ENCODE measurements at regions of chr13 and their contacts with region 1.

Region 1: DNA sequence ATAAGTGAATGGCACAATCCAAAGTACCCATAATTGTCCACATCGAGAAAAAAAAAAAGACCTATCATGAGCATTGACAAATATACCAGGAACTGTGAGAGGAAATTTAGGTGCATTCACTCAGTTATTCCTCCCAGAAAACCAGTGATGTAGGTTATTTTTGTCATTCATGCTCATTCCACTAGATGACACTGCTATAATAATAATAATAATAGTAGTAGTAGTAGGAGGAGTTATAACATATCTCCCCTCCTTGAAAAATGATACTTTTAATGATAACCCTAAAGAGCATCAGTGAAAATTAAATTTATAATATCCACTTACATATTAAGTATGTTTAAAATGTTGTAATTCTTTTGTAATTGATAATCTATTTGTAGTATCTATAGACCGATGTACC is 463.9 kb upstream of the MIR17HG start:
- DNase-seq: no peak
- H3K4me3 ChIP-seq: no peak overlapping the region
- H3K27ac ChIP-seq: no peak overlapping the region
- H3K4me1 ChIP-seq: no peaks in the 10 kb centered on the region
- H3K27me3 ChIP-seq: no peaks in the 10 kb centered on the region
- CTCF ChIP-seq: peak; percentile 29; the same call in 1 of the 2 replicates

Region 2: DNA sequence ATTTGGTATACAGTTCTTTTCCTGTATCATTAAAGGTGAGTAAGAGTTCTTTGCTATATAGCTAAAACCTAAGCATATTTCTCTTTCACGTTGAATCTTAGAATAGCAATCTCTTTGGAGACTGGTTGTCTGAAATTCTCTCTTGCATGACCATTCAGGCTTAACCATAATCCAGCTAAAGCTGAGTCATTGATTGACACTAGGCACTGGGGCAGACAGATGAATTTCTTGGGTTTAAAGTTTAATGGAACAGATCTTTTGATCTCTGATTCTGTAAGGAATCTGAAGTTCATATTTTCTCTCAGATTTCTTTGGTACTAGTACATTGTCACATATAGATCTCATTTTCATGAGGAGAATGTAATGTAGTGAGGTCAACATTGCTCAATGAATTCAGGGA is 66.6 kb after region 1 on chr13:
- CTCF ChIA-PET with region 1: no interaction called
- POLR2A ChIA-PET with region 1: no interaction called
- intact Hi-C with region 1: no loop called
- DNase-seq: no peak
- H3K4me3 ChIP-seq: no peak overlapping the region
- H3K27ac ChIP-seq: no peak overlapping the region
- H3K4me1 ChIP-seq: no peaks in the 10 kb centered on the region
- H3K27me3 ChIP-seq: no peaks in the 10 kb centered on the region
- CTCF ChIP-seq: no peak

Region 3: GRCh38 chr13:90968166-90968904 is 84.7 kb after region 1 on chr13:
- CTCF ChIA-PET with region 1: no interaction called
- POLR2A ChIA-PET with region 1: no interaction called
- intact Hi-C with region 1: loop called (anchors 5 kb)
- DNase-seq: peak; percentile 41
- H3K4me3 ChIP-seq: no peak overlapping the region
- H3K27ac ChIP-seq: no peak overlapping the region
- H3K4me1 ChIP-seq: no peaks in the 10 kb centered on the region
- H3K27me3 ChIP-seq: no peaks in the 10 kb centered on the region
- CTCF ChIP-seq: peak; percentile 57

Region 4: DNA sequence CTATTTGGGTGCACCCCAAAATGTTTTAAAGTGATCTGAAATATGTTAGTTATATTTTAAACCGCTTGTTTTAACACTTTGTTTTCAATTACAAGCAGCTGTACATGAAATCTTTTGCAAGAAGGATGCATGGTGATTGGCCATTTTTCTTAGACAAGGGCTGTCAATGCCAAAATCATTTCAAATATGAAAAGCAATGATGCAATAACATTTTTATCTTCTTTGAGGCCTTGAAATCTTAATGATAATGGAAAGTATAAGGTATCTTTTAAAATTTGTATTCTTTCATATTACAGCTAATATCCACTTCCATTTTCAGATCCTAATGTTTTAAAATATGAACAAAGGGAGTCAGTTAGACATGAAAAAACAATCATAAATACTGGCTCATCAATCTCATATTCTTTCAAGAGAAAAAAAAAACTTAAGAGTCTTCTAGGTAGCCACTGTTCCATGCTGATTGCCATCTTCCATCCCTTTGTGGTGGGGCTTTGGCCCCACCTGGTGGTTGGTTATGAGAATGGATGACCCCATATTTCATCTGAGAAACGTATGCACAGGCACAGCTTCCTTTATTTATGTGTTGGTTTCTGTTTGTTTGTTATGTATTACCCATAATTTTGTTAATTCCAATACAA is 133.6 kb after region 1 on chr13:
- CTCF ChIA-PET with region 1: no interaction called
- POLR2A ChIA-PET with region 1: no interaction called
- intact Hi-C with region 1: loop called (anchors 5 kb)
- DNase-seq: peak; percentile 75
- H3K4me3 ChIP-seq: no peak overlapping the region
- H3K27ac ChIP-seq: no peak overlapping the region
- H3K4me1 ChIP-seq: no peaks in the 10 kb centered on the region
- H3K27me3 ChIP-seq: no peaks in the 10 kb centered on the region
- CTCF ChIP-seq: peak; percentile 81

Measured in A673 (cell line).